ENCODE measurements at regions of chr5 and their contacts with region 1.

Region 1: GRCh38 chr5:132500931-132501630 is 10.5 kb upstream of the IRF1 start:
- DNase-seq: no peak
- H3K4me3 ChIP-seq: no peak overlapping the region
- H3K27ac ChIP-seq: no peak overlapping the region
- H3K4me1 ChIP-seq: peaks cover 19% of the 10 kb centered on the region
- H3K27me3 ChIP-seq: no peaks in the 10 kb centered on the region
- CTCF ChIP-seq: peak; percentile 75 to 85

Region 2: DNA sequence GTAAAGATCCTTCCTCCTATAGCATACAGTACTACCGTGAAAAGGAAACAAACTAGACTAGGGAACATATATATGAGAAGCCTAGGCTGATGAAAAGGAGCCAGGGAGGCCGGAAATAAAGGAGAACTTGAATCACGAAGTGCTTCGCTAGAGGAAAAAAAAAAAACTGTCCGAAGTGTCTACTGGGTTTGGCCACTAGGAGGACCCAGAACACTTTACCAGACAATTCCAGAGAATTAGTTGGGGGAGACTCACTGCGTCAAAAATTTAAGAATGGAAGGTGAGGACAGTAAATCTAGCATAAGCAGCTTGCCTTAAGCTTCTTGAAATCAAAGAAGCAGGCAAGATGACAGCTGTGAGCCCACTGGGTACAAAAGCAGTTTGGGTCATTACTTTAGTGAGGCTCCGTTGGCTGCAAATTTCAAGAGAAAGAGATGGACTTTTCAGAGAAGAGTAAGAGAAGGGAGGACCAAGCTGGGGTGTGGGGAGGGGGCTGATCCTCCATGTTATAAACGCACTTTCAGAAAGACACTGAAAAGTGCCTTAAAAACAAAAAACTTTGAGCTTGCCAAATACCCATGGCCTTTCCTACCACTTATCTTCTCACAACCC is 320.8 kb before region 1 on chr5:
- CTCF ChIA-PET with region 1: no interaction called
- dilution Hi-C with region 1: no loop called
- in situ Hi-C with region 1: no loop called
- intact Hi-C with region 1: loop called (anchors 1 kb)
- DNase-seq: peak; percentile 63
- H3K4me3 ChIP-seq: no peak overlapping the region
- H3K27ac ChIP-seq: no peak overlapping the region
- H3K4me1 ChIP-seq: peaks cover 22% of the 10 kb centered on the region
- H3K27me3 ChIP-seq: no peaks in the 10 kb centered on the region
- CTCF ChIP-seq: peak; percentile 79 to 87

Region 3: GRCh38 chr5:132215329-132215728 is 285.8 kb before region 1 on chr5:
- CTCF ChIA-PET with region 1: interaction called, 20 read pairs
- dilution Hi-C with region 1: no loop called
- in situ Hi-C with region 1: no loop called
- intact Hi-C with region 1: no loop called
- DNase-seq: peak; percentile 98
- H3K4me3 ChIP-seq: no peak overlapping the region
- H3K27ac ChIP-seq: peak overlapping the region; percentile 61
- H3K4me1 ChIP-seq: peaks cover 19% of the 10 kb centered on the region
- H3K27me3 ChIP-seq: no peaks in the 10 kb centered on the region
- CTCF ChIP-seq: no peak

Region 4: DNA sequence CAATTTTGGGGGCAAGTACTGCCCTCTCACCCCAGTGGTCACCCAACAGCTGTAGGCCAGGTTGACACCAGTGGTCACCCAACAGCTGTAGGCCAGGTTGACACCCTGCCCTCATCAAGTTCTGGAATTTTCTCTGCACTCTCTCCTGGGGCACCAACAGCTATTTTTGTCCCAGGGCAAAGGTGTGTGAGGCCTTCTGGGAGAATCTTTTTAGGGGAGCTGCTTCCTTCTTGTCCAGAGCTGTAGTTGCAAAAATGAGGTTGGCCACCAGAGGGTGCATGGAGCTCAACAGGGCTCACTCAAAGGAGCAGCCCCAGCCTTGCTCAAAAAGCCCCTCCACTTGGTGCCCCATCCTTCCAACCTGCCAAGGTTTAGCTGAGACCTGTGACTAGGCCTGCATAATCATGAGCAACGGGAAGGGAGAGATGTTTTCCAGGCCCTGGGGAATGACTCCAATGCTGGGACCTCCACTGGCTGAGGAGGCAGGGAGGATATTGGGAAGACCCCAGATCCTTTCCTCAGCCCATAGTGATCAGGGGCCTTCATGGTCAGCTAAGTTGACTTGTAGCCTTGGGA is 262.8 kb before region 1 on chr5:
- CTCF ChIA-PET with region 1: no interaction called
- dilution Hi-C with region 1: no loop called
- in situ Hi-C with region 1: no loop called
- intact Hi-C with region 1: loop called (anchors 1 kb)
- DNase-seq: peak; percentile 50
- H3K4me3 ChIP-seq: no peak overlapping the region
- H3K27ac ChIP-seq: no peak overlapping the region
- H3K4me1 ChIP-seq: peaks cover 12% of the 10 kb centered on the region
- H3K27me3 ChIP-seq: no peaks in the 10 kb centered on the region
- CTCF ChIP-seq: peak; percentile 76 to 89

Region 5: GRCh38 chr5:132272311-132273210 is 228.5 kb before region 1 on chr5:
- CTCF ChIA-PET with region 1: no interaction called
- dilution Hi-C with region 1: no loop called
- in situ Hi-C with region 1: no loop called
- intact Hi-C with region 1: loop called (anchors 2 kb)
- DNase-seq: no peak
- H3K4me3 ChIP-seq: no peak overlapping the region
- H3K27ac ChIP-seq: no peak overlapping the region
- H3K4me1 ChIP-seq: no peaks in the 10 kb centered on the region
- H3K27me3 ChIP-seq: no peaks in the 10 kb centered on the region
- CTCF ChIP-seq: peak; percentile 50 to 67

Region 6: GRCh38 chr5:132419502-132420468 is 81.3 kb before region 1 on chr5:
- CTCF ChIA-PET with region 1: interaction called, 7 read pairs
- dilution Hi-C with region 1: no loop called
- in situ Hi-C with region 1: loop called in 1 of 2 experiments (anchors 10 kb)
- intact Hi-C with region 1: loop called (anchors 1 kb)
- DNase-seq: peak; percentile 48
- H3K4me3 ChIP-seq: no peak overlapping the region
- H3K27ac ChIP-seq: no peak overlapping the region
- H3K4me1 ChIP-seq: peaks cover 51% of the 10 kb centered on the region
- H3K27me3 ChIP-seq: no peaks in the 10 kb centered on the region
- CTCF ChIP-seq: peak; percentile 45 to 82

Region 7: DNA sequence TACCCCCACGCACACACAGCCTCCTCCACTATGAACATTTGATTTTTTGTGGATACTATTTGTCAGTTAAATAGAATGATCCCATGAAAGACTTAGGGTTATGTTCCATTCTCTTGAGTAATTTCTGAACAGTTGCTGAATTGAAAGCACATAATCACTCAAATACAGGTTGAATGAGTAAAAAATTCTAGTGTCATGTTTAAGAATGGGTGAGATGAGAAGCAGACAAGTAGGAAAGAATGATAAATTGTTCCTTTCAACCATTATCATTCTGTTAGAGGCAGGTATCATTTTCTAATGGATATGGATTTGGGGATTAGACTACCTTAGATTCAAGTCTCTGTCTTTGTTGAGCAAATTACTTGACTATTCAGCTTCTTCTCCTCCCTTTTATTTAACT is 75.0 kb after region 1 on chr5:
- CTCF ChIA-PET with region 1: no interaction called
- dilution Hi-C with region 1: no loop called
- in situ Hi-C with region 1: no loop called
- intact Hi-C with region 1: no loop called
- DNase-seq: no peak
- H3K4me3 ChIP-seq: no peak overlapping the region
- H3K27ac ChIP-seq: no peak overlapping the region
- H3K4me1 ChIP-seq: no peaks in the 10 kb centered on the region
- H3K27me3 ChIP-seq: no peaks in the 10 kb centered on the region
- CTCF ChIP-seq: no peak

Measured in mammary epithelial cell (primary cell).